GM12878 (cell line): ENCODE measurements at regions of chr17 and their contacts with region 1.

Region 1: GRCh38 chr17:27353461-27354050 is 59.6 kb downstream of the WSB1 start:
- DNase-seq: peak; percentile 42
- ATAC-seq: peak; percentile 94
- H3K4me3 ChIP-seq: peak overlapping the region; percentile 73
- H3K27ac ChIP-seq: peak overlapping the region; percentile 70
- H3K4me1 ChIP-seq: peaks cover 7% of the 10 kb centered on the region
- H3K27me3 ChIP-seq: no peaks in the 10 kb centered on the region
- CTCF ChIP-seq: peak; percentile 63 to 93 (median 89); a peak in 4 of 6 replicates
- EP300 ChIP-seq: peak in 1 of 2 experiments; percentile 39; a peak in 2 of 4 replicates
- POLR2A ChIP-seq: peak; percentile 85
- RAD21 ChIP-seq: peak; percentile 73

Region 2: DNA sequence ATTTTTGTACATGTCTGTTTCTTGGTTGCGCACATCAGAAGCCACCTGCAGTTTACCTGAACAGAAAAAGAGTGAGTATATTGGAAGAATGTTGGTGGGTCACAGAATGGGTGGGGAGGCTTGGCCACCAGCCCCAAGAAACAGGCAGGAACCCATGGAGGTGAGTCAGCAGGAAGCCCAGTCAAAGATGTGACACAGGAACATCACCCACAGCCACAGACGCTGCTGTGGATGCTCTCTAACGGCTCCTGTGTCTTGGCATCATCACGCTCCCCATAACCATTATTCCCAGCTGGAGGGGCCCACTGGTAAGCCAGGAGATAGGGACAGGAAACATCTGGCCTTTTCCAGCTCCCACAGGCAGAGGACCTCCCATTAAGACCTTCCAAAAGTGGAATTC is 153.6 kb before region 1 on chr17:
- CTCF ChIA-PET with region 1: interaction called, 14 read pairs
- POLR2A ChIA-PET with region 1: no interaction called
- RAD21 ChIA-PET with region 1: interaction called, 3 read pairs
- SMC1A ChIA-PET with region 1: interaction called, 5 read pairs
- in situ Hi-C with region 1: no loop called
- intact Hi-C with region 1: no loop called
- DNase-seq: no peak
- ATAC-seq: no peak
- H3K4me3 ChIP-seq: no peak overlapping the region
- H3K27ac ChIP-seq: no peak overlapping the region
- H3K4me1 ChIP-seq: no peaks in the 10 kb centered on the region
- H3K27me3 ChIP-seq: no peaks in the 10 kb centered on the region
- CTCF ChIP-seq: no peak
- EP300 ChIP-seq: no peak
- POLR2A ChIP-seq: no peak
- RAD21 ChIP-seq: no peak

Region 3: GRCh38 chr17:27256225-27257030 is 97.1 kb before region 1 on chr17:
- CTCF ChIA-PET with region 1: no interaction called
- POLR2A ChIA-PET with region 1: no interaction called
- RAD21 ChIA-PET with region 1: no interaction called
- SMC1A ChIA-PET with region 1: no interaction called
- in situ Hi-C with region 1: no loop called
- intact Hi-C with region 1: no loop called
- DNase-seq: no peak
- ATAC-seq: no peak
- H3K4me3 ChIP-seq: no peak overlapping the region
- H3K27ac ChIP-seq: no peak overlapping the region
- H3K4me1 ChIP-seq: no peaks in the 10 kb centered on the region
- H3K27me3 ChIP-seq: no peaks in the 10 kb centered on the region; a peak in 1 of 4 replicates
- CTCF ChIP-seq: no peak
- EP300 ChIP-seq: no peak
- POLR2A ChIP-seq: no peak
- RAD21 ChIP-seq: no peak

Region 4: DNA sequence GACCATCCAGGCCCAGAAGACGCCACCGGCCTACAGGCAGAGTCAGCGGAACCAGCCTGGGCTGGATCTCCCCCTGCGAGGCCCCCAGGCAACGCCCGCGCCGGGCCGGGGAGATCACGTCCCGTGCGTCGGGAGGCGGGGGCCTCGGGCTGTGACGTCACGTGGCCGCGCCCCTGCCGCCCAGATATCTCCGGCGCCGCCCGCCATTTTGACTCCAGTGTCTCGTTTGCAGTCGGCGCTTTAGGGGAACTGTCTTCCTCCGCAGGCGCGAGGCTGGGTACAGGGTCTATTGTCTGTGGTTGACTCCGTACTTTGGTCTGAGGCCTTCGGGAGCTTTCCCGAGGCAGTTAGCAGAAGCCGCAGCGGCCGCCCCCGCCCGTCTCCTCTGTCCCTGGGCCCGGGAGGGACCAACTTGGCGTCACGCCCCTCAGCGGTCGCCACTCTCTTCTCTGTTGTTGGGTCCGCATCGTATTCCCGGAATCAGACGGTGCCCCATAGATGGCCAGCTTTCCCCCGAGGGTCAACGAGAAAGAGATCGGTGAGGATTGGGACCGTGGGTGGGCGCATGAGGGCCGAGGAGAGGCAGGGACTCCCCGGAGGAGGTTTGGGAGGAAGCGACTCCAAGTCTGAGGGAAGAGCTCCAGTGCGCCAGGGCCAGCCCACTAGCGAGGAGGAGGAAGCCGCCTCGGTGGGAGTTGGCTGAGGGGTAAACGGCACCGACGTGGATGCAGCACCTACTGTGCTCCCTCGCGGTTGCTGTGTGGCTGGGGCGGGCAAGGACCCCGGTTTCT is 59.5 kb before region 1 on chr17 and contains the start of gene WSB1:
- CTCF ChIA-PET with region 1: interaction called, 14 read pairs
- POLR2A ChIA-PET with region 1: interaction called, 4 read pairs
- RAD21 ChIA-PET with region 1: interaction called, 3 read pairs
- SMC1A ChIA-PET with region 1: interaction called, 5 read pairs
- in situ Hi-C with region 1: no loop called
- intact Hi-C with region 1: loop called (anchors 5 kb)
- DNase-seq: peak; percentile 61
- ATAC-seq: peak; percentile 83
- H3K4me3 ChIP-seq: peak within 1 kb of the TSS; percentile 86
- H3K27ac ChIP-seq: peak within 1 kb of the TSS; percentile 97
- H3K4me1 ChIP-seq: peaks cover 11% of the 10 kb centered on the region
- H3K27me3 ChIP-seq: no peaks in the 10 kb centered on the region
- CTCF ChIP-seq: no peak
- EP300 ChIP-seq: peak; percentile 20 to 57; a peak in 2 of 4 replicates
- POLR2A ChIP-seq: peak; percentile 100
- RAD21 ChIP-seq: no peak
- polyA plus RNA-seq, gene WSB1: 26.6 to 49.8 TPM

Region 5: GRCh38 chr17:27381007-27381501 is 27.5 kb after region 1 on chr17:
- CTCF ChIA-PET with region 1: interaction called, 13 read pairs
- POLR2A ChIA-PET with region 1: no interaction called
- RAD21 ChIA-PET with region 1: interaction called, 4 read pairs
- SMC1A ChIA-PET with region 1: interaction called, 4 read pairs
- in situ Hi-C with region 1: no loop called
- intact Hi-C with region 1: no loop called
- DNase-seq: peak; percentile 27
- ATAC-seq: peak; percentile 96
- H3K4me3 ChIP-seq: no peak overlapping the region
- H3K27ac ChIP-seq: no peak overlapping the region
- H3K4me1 ChIP-seq: peaks cover 14% of the 10 kb centered on the region
- H3K27me3 ChIP-seq: no peaks in the 10 kb centered on the region
- CTCF ChIP-seq: peak; percentile 100; a peak in 5 of 6 replicates
- EP300 ChIP-seq: no peak
- POLR2A ChIP-seq: no peak
- RAD21 ChIP-seq: peak; percentile 67

Region 6: DNA sequence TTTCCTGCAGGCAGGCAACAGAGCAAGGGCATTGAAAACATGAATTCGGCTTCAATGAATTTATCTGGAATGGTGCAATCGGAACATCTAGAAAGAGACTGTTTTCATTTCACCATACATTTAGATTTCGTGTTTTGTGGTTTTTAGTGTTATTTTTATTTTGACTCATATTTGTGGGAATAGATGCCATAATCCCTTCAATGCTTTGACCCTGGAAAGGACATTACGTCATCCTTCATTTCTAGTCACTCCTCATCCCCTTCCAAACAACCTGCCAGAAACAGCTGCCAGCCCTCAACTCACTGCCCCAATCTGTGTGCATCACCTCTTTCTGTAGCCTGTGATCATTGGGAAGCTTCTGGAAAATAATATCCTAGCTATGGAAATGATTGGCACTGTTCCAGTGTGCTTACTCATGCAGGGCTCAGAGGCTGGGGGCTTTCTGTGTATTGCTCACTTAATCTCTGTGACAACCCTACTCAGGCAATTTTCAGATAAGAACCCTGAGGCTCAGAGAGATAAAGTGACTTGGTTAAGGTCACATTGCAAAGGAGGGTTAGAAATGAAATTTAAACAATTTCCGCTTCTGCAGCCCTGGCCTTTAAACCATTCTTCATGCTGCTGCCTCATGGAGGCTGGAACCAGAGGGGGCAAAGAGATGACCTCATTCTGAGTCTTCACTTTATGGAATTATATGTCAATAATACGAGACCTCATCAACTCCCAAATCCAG is 93.2 kb after region 1 on chr17:
- CTCF ChIA-PET with region 1: no interaction called
- POLR2A ChIA-PET with region 1: no interaction called
- RAD21 ChIA-PET with region 1: no interaction called
- SMC1A ChIA-PET with region 1: no interaction called
- in situ Hi-C with region 1: no loop called
- intact Hi-C with region 1: no loop called
- DNase-seq: no peak
- ATAC-seq: no peak
- H3K4me3 ChIP-seq: no peak overlapping the region
- H3K27ac ChIP-seq: no peak overlapping the region
- H3K4me1 ChIP-seq: no peaks in the 10 kb centered on the region
- H3K27me3 ChIP-seq: no peaks in the 10 kb centered on the region
- CTCF ChIP-seq: no peak
- EP300 ChIP-seq: no peak
- POLR2A ChIP-seq: no peak
- RAD21 ChIP-seq: no peak

Region 7: DNA sequence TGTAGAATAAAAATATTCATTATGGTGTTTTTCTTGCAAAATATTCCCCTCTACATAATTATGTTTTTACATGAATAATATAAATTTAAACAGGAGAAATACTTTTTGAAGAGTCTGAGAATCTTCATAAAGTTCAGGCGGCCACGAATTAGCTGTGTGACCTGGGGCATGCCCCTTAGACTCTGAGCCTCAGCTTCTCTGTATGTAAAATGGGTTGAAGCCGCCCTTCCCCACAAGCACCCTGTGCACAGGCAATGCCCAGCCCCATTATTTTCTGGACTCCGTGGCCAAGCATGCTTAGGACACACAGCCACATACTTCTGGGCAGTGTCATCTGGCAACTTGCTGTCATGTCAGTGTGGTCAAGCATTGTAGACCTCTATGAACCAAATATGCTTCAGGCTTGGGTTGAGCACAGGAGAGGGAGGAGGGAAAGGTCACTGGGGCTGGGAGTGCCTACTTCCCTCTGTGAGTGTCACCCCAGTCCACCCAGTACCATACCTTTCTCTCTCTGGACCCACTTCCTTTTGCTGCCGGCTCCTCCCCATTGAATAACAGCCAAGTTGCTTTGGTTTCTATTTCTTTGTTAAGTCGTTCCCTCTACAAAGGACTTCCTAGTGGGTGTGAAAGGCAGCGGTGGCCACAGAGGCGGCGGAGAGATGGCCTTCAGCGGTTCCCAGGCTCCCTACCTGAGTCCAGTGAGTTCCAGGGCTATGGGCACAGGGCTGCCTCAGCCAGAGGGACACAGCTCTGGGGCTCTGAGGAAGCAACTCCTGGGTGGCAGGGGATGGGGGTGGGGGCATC is 277.3 kb after region 1 on chr17 and contains the start of gene LGALS9:
- CTCF ChIA-PET with region 1: interaction called, 10 read pairs
- POLR2A ChIA-PET with region 1: no interaction called
- RAD21 ChIA-PET with region 1: interaction called, 5 read pairs
- SMC1A ChIA-PET with region 1: interaction called, 4 read pairs
- in situ Hi-C with region 1: loop called (anchors 10 kb)
- intact Hi-C with region 1: no loop called
- DNase-seq: peak; percentile 53
- ATAC-seq: peak; percentile 83
- H3K4me3 ChIP-seq: peak within 1 kb of the TSS; percentile 78
- H3K27ac ChIP-seq: peak within 1 kb of the TSS; percentile 89
- H3K4me1 ChIP-seq: peaks cover 11% of the 10 kb centered on the region
- H3K27me3 ChIP-seq: no peaks in the 10 kb centered on the region
- CTCF ChIP-seq: no peak
- EP300 ChIP-seq: no peak
- POLR2A ChIP-seq: peak; percentile 79
- RAD21 ChIP-seq: no peak
- polyA plus RNA-seq, gene LGALS9: 22.5 to 30.2 TPM